Calu3 (cell line): ENCODE measurements at regions of chr1 and their contacts with region 1.

Region 1: DNA sequence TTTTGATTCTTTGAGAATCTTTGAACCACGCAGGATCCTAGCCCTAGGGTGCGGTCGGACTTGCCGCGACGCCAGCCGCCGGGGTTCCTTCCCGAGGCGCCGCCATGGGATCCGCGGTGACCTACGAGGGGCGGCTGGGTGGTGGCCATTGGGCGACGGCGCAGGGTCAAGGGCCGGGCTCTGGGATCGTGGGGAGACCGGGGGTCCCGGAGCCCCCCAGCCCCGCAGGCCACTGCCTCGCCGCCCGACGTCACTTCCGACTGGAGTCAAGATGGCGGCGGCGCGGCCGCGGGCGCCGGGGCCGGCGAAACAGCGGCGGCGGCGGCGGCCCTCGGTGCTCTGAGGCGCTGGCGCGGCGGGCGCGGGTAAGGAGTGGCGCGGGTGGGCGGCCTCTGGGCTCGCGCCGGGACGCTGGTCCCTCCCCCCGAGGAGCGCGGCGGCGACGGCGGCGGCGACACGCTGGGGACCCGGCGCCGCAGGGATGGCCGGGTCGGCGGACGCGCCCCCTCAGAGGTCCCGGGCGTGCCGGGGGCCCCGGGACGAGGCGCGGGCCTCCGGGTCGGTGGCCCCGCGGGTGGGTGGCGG is at the start of gene PRDM2:
- DNase-seq: peak; percentile 42
- H3K4me3 Mint-ChIP-seq: peak within 1 kb of the TSS; percentile 67
- H3K27ac Mint-ChIP-seq: peak within 1 kb of the TSS; percentile 87
- H3K4me1 Mint-ChIP-seq: peaks cover 7% of the 10 kb centered on the region
- H3K27me3 Mint-ChIP-seq: no peaks in the 10 kb centered on the region
- CTCF ChIP-seq: no peak
- total RNA-seq, gene PRDM2: 26.9 and 29.9 TPM in 2 replicates

Region 2: DNA sequence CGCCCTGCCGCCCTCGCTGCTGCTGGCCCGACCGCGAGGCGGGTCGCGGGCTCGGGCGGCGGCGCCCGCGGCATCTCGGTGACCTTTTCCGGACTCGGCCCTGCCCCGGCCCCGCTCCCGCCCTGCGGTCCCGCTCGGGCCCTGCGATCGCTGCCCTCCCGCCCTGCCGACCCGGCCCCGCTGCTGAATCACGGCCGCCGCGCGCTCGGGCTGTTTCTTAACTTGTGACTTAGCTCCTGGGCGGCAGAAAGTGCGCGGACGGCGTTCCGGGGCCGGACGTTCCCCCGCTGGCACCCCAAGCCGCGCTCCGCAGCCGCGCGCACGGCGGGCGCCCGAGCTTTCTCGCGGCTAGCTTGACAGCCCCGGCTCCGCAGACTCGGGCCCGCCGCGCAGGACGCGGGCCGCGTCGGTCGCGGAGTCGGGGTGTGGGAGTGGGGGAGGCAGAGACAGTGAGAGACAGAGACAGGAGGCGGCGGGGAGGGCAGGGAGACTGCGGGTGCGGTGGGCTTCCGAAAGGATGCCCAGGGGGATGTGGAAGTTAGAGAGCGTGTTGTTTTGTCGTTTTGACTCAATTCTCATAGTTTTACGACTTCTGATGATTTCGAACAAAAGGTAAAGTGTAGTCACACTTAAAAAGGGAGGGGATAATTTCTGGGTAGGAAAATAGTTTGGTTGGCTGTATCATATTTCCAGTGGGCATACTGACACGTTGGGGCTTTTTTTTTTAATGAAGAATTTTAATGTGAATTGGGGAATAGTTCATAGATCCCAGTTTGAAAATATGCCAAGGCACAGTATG is 49.7 kb after region 1 on chr1:
- CTCF ChIA-PET with region 1: no interaction called
- intact Hi-C with region 1: loop called (anchors 5 kb)
- DNase-seq: peak; percentile 46
- H3K4me3 Mint-ChIP-seq: peak overlapping the region; percentile 79
- H3K27ac Mint-ChIP-seq: peak overlapping the region; percentile 90
- H3K4me1 Mint-ChIP-seq: peaks cover 24% of the 10 kb centered on the region
- H3K27me3 Mint-ChIP-seq: no peaks in the 10 kb centered on the region
- CTCF ChIP-seq: no peak

Region 3: DNA sequence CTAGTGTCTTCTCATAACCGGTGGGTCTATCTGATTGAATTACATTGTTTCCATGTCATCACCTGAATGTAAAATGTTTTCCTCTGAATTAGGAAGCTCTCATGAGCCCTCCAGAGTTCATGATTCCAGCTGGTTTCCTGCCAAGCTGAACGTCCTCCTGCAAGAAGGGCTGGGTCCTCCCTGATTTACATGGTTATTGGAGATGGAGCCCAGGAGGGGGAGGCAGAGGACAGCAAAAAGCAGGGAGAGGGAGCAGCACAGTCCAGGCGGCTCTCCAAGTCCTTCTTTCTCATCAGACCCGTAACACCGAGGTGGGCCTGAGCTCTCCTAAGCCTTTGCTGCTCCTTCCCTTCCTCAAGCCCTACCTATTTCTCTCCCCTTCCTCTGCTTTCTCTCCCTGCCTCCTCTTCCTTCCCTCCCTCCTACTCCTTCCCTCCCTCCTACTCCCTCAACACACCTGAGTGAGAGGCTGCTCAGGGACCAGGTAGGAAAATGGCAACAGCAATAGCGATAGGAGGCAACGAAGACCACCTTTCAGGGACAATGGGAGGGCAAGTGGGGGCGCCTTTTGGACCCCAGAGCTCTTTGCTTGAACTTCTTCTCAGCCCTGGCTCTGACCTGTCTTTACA is 265.9 kb after region 1 on chr1:
- CTCF ChIA-PET with region 1: no interaction called
- intact Hi-C with region 1: no loop called
- DNase-seq: peak; percentile 32
- H3K4me3 Mint-ChIP-seq: no peak overlapping the region
- H3K27ac Mint-ChIP-seq: no peak overlapping the region
- H3K4me1 Mint-ChIP-seq: no peaks in the 10 kb centered on the region
- H3K27me3 Mint-ChIP-seq: peaks cover 11% of the 10 kb centered on the region
- CTCF ChIP-seq: no peak

Region 4: DNA sequence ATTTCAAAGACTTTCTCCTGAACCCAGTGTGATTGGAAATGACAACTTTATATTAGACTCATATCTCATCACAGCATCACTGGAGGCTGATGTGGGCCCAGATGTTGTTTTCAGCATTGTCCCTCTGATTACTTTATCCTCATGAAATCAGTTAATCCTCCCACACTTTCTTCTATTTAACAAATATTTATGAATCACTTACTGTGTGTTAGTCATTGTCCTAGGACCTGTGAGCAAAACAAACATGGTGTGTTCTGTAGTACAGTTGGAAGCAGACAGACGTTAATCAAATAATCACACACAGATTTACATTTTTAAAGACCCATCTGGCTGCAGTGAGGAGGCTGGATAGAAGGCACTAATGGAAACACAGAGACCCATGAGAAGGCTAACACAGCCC is 383.7 kb after region 1 on chr1:
- CTCF ChIA-PET with region 1: no interaction called
- intact Hi-C with region 1: no loop called
- DNase-seq: no peak
- H3K4me3 Mint-ChIP-seq: no peak overlapping the region
- H3K27ac Mint-ChIP-seq: no peak overlapping the region
- H3K4me1 Mint-ChIP-seq: no peaks in the 10 kb centered on the region
- H3K27me3 Mint-ChIP-seq: no peaks in the 10 kb centered on the region
- CTCF ChIP-seq: no peak